Activated CD4-positive, alpha-beta T cell treated with anti-CD3 and anti-CD28 coated beads, Interleukin-2, amount 10 ng/mL, durations not matched to agents 24 days and 14 days (primary cell): ENCODE measurements at regions of chr2 and their contacts with region 1.

Region 1: GRCh38 chr2:143259368-143259958 is 130.2 kb downstream of the ARHGAP15 start:
- DNase-seq: peak; percentile 92
- H3K4me3 Mint-ChIP-seq: peak overlapping the region; percentile 80
- H3K27ac Mint-ChIP-seq: peak overlapping the region; percentile 95
- H3K4me1 Mint-ChIP-seq: peaks cover 66% of the 10 kb centered on the region
- H3K27me3 Mint-ChIP-seq: no peaks in the 10 kb centered on the region

Region 2: GRCh38 chr2:143110758-143111428 is 148.6 kb before region 1 on chr2:
- intact Hi-C with region 1: loop called (anchors 1 kb)
- DNase-seq: peak; percentile 89
- H3K4me3 Mint-ChIP-seq: peak overlapping the region; percentile 55
- H3K27ac Mint-ChIP-seq: peak overlapping the region; percentile 83
- H3K4me1 Mint-ChIP-seq: peaks cover 38% of the 10 kb centered on the region
- H3K27me3 Mint-ChIP-seq: peaks cover 4% of the 10 kb centered on the region

Region 3: GRCh38 chr2:143162123-143162837 is 97.2 kb before region 1 on chr2:
- intact Hi-C with region 1: loop called (anchors 1 kb)
- DNase-seq: peak; percentile 84
- H3K4me3 Mint-ChIP-seq: no peak overlapping the region
- H3K27ac Mint-ChIP-seq: peak overlapping the region; percentile 15
- H3K4me1 Mint-ChIP-seq: peaks cover 59% of the 10 kb centered on the region
- H3K27me3 Mint-ChIP-seq: no peaks in the 10 kb centered on the region

Region 4: GRCh38 chr2:143217512-143218115 is 41.8 kb before region 1 on chr2:
- intact Hi-C with region 1: loop called (anchors 1 kb)
- DNase-seq: no peak
- H3K4me3 Mint-ChIP-seq: no peak overlapping the region
- H3K27ac Mint-ChIP-seq: peak overlapping the region; percentile 79
- H3K4me1 Mint-ChIP-seq: peaks cover 40% of the 10 kb centered on the region
- H3K27me3 Mint-ChIP-seq: no peaks in the 10 kb centered on the region

Region 5: GRCh38 chr2:143468341-143468888 is 209.0 kb after region 1 on chr2:
- intact Hi-C with region 1: loop called (anchors 5 kb)
- DNase-seq: no peak
- H3K4me3 Mint-ChIP-seq: no peak overlapping the region
- H3K27ac Mint-ChIP-seq: peak overlapping the region; percentile 81
- H3K4me1 Mint-ChIP-seq: peaks cover 18% of the 10 kb centered on the region
- H3K27me3 Mint-ChIP-seq: no peaks in the 10 kb centered on the region

Region 6: DNA sequence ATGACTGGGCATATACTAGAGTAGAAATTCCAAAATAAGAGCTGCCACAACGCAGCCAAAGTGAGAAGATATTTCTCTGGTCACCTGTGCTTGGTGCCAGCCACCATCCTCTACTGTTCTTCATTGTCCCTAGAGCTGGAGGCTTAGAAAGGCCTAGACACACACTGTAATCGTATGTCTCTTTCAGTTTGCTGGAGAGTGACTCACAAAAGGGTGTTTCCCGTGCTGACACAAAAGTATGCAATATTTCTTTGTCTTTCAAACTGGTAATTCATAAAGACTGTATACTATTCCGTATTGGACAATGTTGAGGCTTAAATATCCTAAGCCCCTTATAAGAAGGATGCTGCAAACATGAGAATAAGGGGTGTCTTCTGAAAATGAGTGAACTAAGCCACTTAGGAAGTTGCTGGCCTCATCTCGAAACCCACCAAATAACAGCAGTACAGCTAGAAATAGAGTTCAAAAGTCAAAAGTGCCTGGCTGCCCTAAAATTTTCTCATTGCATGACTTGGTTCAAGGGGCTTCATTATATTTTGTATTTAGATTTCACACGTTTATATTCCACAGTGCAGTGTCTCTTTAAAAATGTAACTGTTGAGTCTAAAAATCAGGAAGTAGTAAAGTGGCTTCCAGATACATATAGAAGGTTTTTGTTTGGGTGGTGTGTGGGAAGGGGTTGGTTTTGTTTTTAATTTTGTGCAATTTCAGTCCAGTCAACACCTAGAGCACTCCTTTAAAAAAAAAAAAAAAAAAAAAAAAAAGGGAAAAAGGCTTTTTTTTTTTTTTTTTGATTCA is 470.9 kb after region 1 on chr2:
- intact Hi-C with region 1: loop called (anchors 5 kb)
- DNase-seq: peak; percentile 63
- H3K4me3 Mint-ChIP-seq: peak overlapping the region; percentile 47
- H3K27ac Mint-ChIP-seq: peak overlapping the region; percentile 92
- H3K4me1 Mint-ChIP-seq: peaks cover 31% of the 10 kb centered on the region
- H3K27me3 Mint-ChIP-seq: no peaks in the 10 kb centered on the region